ENCODE measurements at regions of chr6 and their contacts with region 1.

Region 1: DNA sequence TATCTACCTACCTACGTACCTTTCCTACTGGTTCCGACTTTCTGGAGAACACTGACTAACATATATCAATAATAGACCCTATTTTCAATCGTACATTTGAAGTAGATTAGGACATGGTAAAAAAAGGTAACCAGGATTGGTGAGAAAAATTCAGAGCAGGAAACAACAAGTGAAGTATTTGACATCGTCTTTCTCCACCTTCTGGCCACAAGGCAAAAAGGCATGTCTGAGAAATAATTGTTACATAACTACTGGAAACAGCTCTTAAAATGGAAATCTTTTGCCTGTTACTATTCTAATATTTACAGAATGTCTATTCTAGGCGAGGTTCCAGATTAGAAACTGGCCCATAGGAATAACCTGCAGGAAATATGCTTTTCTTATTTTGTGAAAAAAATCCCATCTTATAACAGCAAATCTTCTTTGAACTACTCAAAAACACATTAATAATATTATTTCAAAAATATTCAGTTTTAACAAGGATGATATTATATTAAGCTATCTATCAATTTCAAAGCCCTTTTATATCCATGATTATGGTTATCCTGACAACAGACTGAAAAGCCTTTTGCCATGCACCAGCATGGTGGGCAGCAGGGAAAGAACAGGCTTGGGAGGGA is 80.8 kb downstream of the RCAN2 start:
- DNase-seq: peak in 3 of 5 donors; percentile 30 to 37 (median 31)
- H3K4me3 ChIP-seq: no peak overlapping the region
- H3K27ac ChIP-seq: peak overlapping the region in 1 of 2 donors; percentile 46
- H3K4me1 ChIP-seq: peaks cover 4% of the 10 kb centered on the region
- H3K27me3 ChIP-seq: no peaks in the 10 kb centered on the region
- CTCF ChIP-seq: peak; percentile 34 to 93 (median 89)
- EP300 ChIP-seq: no peak
- POLR2A ChIP-seq: no peak

Region 2: GRCh38 chr6:45830441-45831139 is 579.9 kb before region 1 on chr6:
- intact Hi-C with region 1: no loop called
- DNase-seq: no peak
- H3K4me3 ChIP-seq: no peak overlapping the region
- H3K27ac ChIP-seq: no peak overlapping the region
- H3K4me1 ChIP-seq: peaks cover 4% of the 10 kb centered on the region
- H3K27me3 ChIP-seq: no peaks in the 10 kb centered on the region
- CTCF ChIP-seq: no peak
- EP300 ChIP-seq: no peak
- POLR2A ChIP-seq: no peak

Region 3: GRCh38 chr6:46090115-46091079 is 320.0 kb before region 1 on chr6:
- intact Hi-C with region 1: loop called in 2 of 4 experiments (anchors 2 to 10 kb)
- DNase-seq: peak; percentile 23 to 48 (median 43)
- H3K4me3 ChIP-seq: no peak overlapping the region
- H3K27ac ChIP-seq: no peak overlapping the region
- H3K4me1 ChIP-seq: no peaks in the 10 kb centered on the region
- H3K27me3 ChIP-seq: no peaks in the 10 kb centered on the region
- CTCF ChIP-seq: peak; percentile 32 to 42 (median 33)
- EP300 ChIP-seq: no peak
- POLR2A ChIP-seq: no peak

Region 4: DNA sequence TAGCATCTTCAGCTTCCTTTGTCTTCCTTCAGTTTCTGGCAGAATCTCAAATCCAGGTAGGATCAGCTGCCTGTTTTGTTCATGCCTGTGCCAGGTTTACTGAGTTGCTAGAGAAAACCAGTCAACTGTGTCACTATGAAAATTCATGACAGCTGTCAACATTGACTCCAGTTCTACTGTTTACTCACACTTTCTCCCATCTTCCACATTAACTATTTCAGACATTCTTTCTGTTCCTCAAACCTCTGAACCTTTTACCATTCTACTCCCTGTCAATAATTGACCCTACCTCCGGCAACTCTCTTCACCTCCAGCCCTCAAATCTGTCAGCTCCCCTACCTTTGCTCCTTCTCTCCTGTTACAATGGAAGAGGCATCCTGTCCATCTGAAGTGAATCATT is 272.2 kb before region 1 on chr6:
- intact Hi-C with region 1: no loop called
- DNase-seq: no peak
- H3K4me3 ChIP-seq: no peak overlapping the region
- H3K27ac ChIP-seq: no peak overlapping the region
- H3K4me1 ChIP-seq: no peaks in the 10 kb centered on the region
- H3K27me3 ChIP-seq: no peaks in the 10 kb centered on the region
- CTCF ChIP-seq: no peak
- EP300 ChIP-seq: no peak
- POLR2A ChIP-seq: no peak

Measured in ovary (tissue), 10 donors.